ENCODE measurements at regions of chr18 and their contacts with region 1.

Region 1: GRCh38 chr18:31101183-31102024 is 817 bp downstream of the DSC2 start:
- DNase-seq: no peak
- ATAC-seq: peak; percentile 60
- H3K4me3 ChIP-seq: peak overlapping the region; percentile 64 to 82
- H3K27ac ChIP-seq: peak overlapping the region; percentile 83
- H3K4me1 ChIP-seq: peaks cover 31 to 67% of the 10 kb centered on the region in 2 experiments
- H3K27me3 ChIP-seq: no peaks in the 10 kb centered on the region
- CTCF ChIP-seq: peak in 2 of 3 experiments; percentile 23 to 24; a peak in 2 of 6 replicates
- POLR2A ChIP-seq: no peak
- RAD21 ChIP-seq: no peak

Region 2: DNA sequence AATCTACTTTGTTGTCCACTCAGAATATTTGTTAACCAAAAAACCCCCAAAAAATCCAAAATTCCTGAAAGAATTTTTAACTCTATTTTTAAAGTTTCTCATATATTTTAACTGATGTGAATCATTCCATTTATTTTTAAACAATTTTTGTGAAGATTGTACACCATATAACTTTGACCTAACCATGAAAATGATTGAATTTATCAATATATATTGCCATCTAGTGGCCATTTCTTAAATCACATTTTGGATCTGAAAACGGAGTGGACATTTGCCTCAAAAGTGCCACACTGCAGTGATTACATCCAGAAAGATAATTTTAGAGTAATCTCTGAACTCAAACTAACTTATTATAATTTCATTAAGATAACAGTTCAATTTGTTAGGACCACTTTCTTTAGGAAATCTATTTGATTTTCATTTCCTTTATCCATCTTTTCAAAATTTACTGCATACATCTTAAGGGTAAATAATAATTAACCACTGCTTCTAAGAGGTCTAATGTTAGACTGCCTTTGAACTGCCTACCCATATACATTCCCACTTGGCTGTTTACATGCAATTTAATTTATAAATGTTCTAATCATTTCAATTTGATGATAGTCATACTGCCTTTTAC is 130.0 kb before region 1 on chr18:
- CTCF ChIA-PET with region 1: no interaction called
- POLR2A ChIA-PET with region 1: no interaction called
- RAD21 ChIA-PET with region 1: no interaction called
- intact Hi-C with region 1: no loop called
- DNase-seq: peak; percentile 34
- ATAC-seq: peak; percentile 75
- H3K4me3 ChIP-seq: no peak overlapping the region
- H3K27ac ChIP-seq: no peak overlapping the region
- H3K4me1 ChIP-seq: peaks cover 0 to 4% of the 10 kb centered on the region in 2 experiments; a peak in 2 of 4 replicates
- H3K27me3 ChIP-seq: no peaks in the 10 kb centered on the region
- CTCF ChIP-seq: peak; percentile 25 to 66 (median 33); a peak in 4 of 6 replicates
- POLR2A ChIP-seq: no peak
- RAD21 ChIP-seq: peak; percentile 48

Region 3: DNA sequence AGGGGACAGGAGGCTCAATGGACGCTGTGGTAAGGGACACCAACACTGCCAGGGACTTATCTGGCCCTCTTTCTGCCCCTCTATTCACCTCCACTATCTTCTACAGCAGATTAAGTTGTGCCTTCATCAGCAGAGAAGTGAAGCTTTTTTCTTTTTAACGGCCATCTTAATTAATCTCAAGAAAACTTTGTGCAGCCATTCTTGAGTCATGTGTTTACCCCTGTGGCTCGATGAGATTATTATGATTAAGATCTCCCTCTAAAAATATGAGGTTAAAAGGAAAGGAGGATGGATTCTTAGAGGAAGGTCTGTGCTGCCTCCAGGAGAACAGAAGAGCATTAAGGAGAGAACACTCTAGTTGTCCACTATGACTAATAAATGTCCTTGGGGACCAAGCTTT is 93.7 kb after region 1 on chr18:
- CTCF ChIA-PET with region 1: no interaction called
- POLR2A ChIA-PET with region 1: no interaction called
- RAD21 ChIA-PET with region 1: no interaction called
- intact Hi-C with region 1: no loop called
- DNase-seq: no peak
- ATAC-seq: no peak
- H3K4me3 ChIP-seq: no peak overlapping the region
- H3K27ac ChIP-seq: no peak overlapping the region
- H3K4me1 ChIP-seq: peaks cover 8 to 18% of the 10 kb centered on the region in 2 experiments; a peak in 3 of 4 replicates
- H3K27me3 ChIP-seq: no peaks in the 10 kb centered on the region
- CTCF ChIP-seq: no peak
- POLR2A ChIP-seq: no peak
- RAD21 ChIP-seq: no peak

Region 4: DNA sequence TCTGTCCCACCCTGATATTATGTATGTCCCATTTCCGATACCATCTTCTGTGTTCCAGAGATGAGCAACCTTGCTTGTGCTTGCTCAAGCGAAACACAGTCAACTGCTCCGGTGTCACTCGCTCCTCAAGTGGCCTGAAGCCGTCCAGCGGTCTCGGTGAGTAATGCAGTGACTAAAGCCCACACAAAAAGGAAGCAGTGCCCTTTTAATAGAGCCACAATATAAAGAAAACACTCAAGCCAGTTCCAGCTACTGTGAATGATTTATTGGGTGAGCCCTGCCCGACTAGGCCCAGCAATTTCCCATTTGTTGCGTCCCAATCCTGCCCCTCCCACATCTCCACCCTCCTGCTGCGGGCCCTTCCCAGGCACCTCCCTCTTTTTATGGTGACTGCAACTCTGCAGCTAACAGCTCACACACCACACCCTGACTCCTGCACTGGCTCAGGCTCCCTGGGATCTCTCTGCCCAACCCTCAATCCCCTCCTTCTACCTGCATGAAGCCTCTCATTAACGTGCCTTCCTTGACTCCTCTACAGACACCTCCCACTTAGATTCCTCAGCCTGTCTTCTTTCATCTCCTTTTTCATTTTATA is 105.5 kb after region 1 on chr18:
- CTCF ChIA-PET with region 1: interaction called, 3 read pairs
- POLR2A ChIA-PET with region 1: interaction called, 3 read pairs
- RAD21 ChIA-PET with region 1: no interaction called
- intact Hi-C with region 1: loop called (anchors 5 kb)
- DNase-seq: peak; percentile 97
- ATAC-seq: peak; percentile 95
- H3K4me3 ChIP-seq: peak overlapping the region; percentile 8 to 20; a peak in 3 of 4 replicates
- H3K27ac ChIP-seq: peak overlapping the region; percentile 32
- H3K4me1 ChIP-seq: peaks cover 17 to 32% of the 10 kb centered on the region in 2 experiments
- H3K27me3 ChIP-seq: no peaks in the 10 kb centered on the region
- CTCF ChIP-seq: peak in 2 of 3 experiments; percentile 25 to 44; a peak in 3 of 6 replicates
- POLR2A ChIP-seq: no peak
- RAD21 ChIP-seq: peak; percentile 63

Region 5: DNA sequence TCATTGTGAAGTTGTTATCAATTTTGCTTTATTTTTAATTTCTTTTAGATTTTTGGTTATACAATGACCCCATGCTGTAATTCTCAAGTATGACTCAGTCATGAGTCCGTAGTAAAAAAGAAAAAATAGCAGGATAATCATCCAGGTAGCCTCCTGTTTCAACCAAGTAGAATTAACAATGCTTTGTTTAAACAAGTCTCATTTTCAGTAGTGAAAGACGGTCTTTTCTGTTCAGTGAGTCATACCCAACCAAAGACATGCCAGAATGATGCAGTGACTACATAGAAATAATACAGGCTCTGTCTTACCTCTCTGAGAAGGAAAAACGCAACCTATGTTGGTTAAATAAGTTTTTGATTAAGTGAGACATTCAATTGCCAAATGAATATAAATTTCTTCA is 129.1 kb after region 1 on chr18:
- CTCF ChIA-PET with region 1: no interaction called
- POLR2A ChIA-PET with region 1: no interaction called
- RAD21 ChIA-PET with region 1: no interaction called
- intact Hi-C with region 1: loop called (anchors 5 kb)
- DNase-seq: peak; percentile 89
- ATAC-seq: peak; percentile 82
- H3K4me3 ChIP-seq: peak overlapping the region in 1 of 2 experiments; percentile 41; a peak in 2 of 4 replicates
- H3K27ac ChIP-seq: peak overlapping the region; percentile 39; the same call in 1 of the 2 replicates
- H3K4me1 ChIP-seq: peaks cover 30 to 65% of the 10 kb centered on the region in 2 experiments
- H3K27me3 ChIP-seq: no peaks in the 10 kb centered on the region
- CTCF ChIP-seq: no peak
- POLR2A ChIP-seq: no peak
- RAD21 ChIP-seq: peak; percentile 40; the same call in 1 of the 2 replicates

Region 6: DNA sequence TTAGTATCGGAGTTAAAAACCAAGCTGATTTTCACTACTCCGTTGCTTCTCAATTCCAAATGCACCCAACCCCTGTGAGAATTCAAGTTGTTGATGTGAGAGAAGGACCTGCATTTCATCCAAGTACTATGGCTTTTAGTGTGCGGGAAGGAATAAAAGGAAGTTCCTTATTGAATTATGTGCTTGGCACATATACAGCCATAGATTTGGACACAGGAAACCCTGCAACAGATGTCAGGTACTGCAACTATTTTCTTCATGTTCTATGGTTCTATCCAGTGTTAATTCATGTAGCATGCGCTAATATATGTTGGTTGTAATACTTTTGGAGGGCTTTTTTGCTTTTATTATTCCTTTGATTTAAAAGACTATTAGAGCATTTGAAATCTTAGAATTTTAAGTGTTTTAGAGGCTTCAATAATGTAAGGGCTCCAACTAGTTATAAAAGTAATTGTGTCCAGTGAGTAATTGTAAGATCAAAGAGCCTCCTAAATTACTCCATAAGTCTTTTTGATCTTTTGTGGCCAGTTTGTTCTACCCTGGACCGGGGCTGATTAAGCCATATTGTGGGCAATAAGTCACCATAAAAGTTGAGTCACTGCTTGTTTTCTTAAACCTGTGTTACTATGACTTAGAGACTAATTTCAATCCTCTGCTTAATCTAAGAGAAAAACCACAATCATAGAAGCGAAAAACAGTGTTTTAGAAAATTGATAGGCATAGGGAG is 298.1 kb after region 1 on chr18:
- CTCF ChIA-PET with region 1: no interaction called
- POLR2A ChIA-PET with region 1: no interaction called
- RAD21 ChIA-PET with region 1: no interaction called
- intact Hi-C with region 1: loop called (anchors 10 kb)
- DNase-seq: peak; percentile 83
- ATAC-seq: peak; percentile 83
- H3K4me3 ChIP-seq: peak overlapping the region; percentile 4 to 39; a peak in 3 of 4 replicates
- H3K27ac ChIP-seq: peak overlapping the region; percentile 64
- H3K4me1 ChIP-seq: peaks cover 49 to 54% of the 10 kb centered on the region in 2 experiments
- H3K27me3 ChIP-seq: no peaks in the 10 kb centered on the region
- CTCF ChIP-seq: no peak
- POLR2A ChIP-seq: no peak
- RAD21 ChIP-seq: peak; percentile 5; the same call in 1 of the 2 replicates

Region 7: DNA sequence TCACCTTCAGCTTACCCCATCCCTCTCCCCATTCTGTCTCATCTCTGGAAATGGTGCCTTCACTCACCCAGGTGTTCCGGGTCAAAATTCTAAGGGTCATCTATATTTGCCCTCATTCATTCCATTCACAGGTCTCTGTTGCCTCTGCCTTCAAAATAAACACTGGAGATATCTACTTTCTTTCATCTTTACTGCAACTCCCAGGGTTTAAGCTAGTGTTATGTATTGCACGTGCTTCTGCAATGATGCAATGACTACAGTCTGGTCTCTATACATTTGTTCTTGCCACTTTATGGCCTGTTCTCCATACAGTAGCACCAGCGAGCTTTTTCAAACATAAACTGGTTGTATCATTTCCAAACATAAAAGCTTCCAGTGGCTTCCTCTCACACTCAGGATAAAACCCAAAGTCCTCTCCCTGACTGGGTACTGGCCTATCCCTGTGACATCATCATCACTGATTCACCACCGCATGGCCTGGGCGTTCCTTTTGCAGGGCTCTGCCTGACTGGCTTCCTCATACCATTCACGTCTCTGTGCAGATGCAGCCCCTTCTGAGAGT is 410.9 kb after region 1 on chr18:
- CTCF ChIA-PET with region 1: no interaction called
- POLR2A ChIA-PET with region 1: no interaction called
- RAD21 ChIA-PET with region 1: no interaction called
- intact Hi-C with region 1: loop called (anchors 5 kb)
- DNase-seq: no peak
- ATAC-seq: peak; percentile 89
- H3K4me3 ChIP-seq: peak overlapping the region in 1 of 2 experiments; percentile 39; a peak in 1 of 4 replicates
- H3K27ac ChIP-seq: peak overlapping the region; percentile 36
- H3K4me1 ChIP-seq: peaks cover 57 to 59% of the 10 kb centered on the region in 2 experiments
- H3K27me3 ChIP-seq: no peaks in the 10 kb centered on the region
- CTCF ChIP-seq: no peak
- POLR2A ChIP-seq: no peak
- RAD21 ChIP-seq: no peak